GM12878 (cell line): ENCODE measurements at regions of chr20 and their contacts with region 1.

Region 1: GRCh38 chr20:38893565-38894090 is 32.6 kb upstream of the FAM83D start:
- DNase-seq: peak; percentile 38
- ATAC-seq: peak; percentile 81
- H3K4me3 ChIP-seq: no peak overlapping the region
- H3K27ac ChIP-seq: peak overlapping the region; percentile 91
- H3K4me1 ChIP-seq: peaks cover 50% of the 10 kb centered on the region
- H3K27me3 ChIP-seq: no peaks in the 10 kb centered on the region
- CTCF ChIP-seq: peak; percentile 90 to 98 (median 95)
- EP300 ChIP-seq: no peak
- POLR2A ChIP-seq: no peak; the same call in 1 of the 2 replicates
- RAD21 ChIP-seq: peak; percentile 95

Region 2: DNA sequence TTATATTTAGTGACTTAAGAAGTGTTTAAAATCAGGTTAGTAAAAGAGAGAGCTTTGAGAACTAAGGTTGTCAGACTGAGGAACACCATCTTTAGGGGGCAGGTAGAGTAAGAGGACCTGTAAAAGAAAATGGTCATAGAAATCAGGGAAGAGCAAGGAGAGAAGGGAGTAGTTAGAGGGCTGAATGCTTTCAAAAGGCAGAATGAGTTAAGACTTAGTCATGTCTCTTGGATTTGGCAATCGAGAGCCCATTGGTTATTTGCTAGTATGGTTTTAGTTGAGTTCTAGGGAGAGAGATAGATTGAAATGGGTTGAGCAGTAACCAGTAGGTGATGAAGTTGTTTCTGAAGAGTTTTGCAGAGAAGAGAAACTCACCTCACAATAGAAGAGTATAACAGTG is 369.9 kb before region 1 on chr20:
- CTCF ChIA-PET with region 1: no interaction called
- POLR2A ChIA-PET with region 1: no interaction called
- RAD21 ChIA-PET with region 1: no interaction called
- SMC1A ChIA-PET with region 1: no interaction called
- in situ Hi-C with region 1: no loop called
- intact Hi-C with region 1: no loop called
- DNase-seq: no peak
- ATAC-seq: no peak
- H3K4me3 ChIP-seq: no peak overlapping the region
- H3K27ac ChIP-seq: no peak overlapping the region
- H3K4me1 ChIP-seq: no peaks in the 10 kb centered on the region
- H3K27me3 ChIP-seq: no peaks in the 10 kb centered on the region
- CTCF ChIP-seq: no peak
- EP300 ChIP-seq: no peak
- POLR2A ChIP-seq: no peak
- RAD21 ChIP-seq: no peak

Region 3: DNA sequence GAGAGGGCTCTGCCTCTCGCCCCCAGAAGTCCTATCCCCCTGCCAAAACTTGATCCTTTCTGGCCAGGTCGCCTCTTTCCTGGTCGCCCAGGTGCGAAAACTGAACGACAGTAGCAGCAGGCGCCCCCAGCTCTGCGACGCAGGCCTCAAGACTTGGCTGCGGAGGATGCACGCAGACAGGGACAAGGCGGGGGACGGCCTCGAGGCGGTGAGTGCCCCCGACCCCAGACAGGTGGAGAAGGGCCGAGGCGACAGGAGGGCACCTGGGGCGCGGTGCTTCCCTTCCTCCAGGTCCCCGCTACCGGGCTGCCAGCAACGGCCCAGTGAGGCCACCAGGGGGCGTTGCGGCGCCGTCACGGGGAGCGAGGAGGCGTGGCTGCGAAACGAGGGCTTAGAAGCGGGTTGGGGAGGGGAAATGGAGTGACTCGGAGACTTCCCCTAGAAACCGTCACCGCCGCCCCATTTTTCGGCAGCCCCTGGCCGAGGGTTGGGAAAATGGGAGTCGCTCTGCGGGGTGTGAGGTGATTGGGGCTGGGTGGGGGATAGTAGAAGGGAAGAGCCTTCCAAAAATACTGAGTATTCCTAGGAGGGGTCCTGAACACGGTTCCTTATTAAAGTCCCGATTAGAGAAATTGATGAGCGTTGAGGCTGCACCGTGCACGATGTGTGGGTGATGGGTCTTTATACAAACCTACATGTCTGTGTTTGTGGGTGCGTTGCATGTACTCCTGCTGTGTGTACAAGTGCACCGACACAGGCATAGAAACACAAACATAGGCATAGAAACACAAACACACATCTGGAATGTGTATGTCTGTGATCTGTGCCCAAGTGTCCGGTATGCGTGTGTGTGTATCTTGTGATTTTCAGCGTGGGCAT is 247.4 kb before region 1 on chr20:
- CTCF ChIA-PET with region 1: interaction called, 41 read pairs
- POLR2A ChIA-PET with region 1: interaction called, 3 read pairs
- RAD21 ChIA-PET with region 1: interaction called, 9 read pairs
- SMC1A ChIA-PET with region 1: interaction called, 19 read pairs
- in situ Hi-C with region 1: loop called (anchors 5 kb)
- intact Hi-C with region 1: loop called (anchors 1 kb)
- DNase-seq: peak; percentile 25
- ATAC-seq: peak; percentile 97
- H3K4me3 ChIP-seq: no peak overlapping the region; the same call in 1 of the 2 replicates
- H3K27ac ChIP-seq: no peak overlapping the region
- H3K4me1 ChIP-seq: no peaks in the 10 kb centered on the region; the same call in none of the 2 replicates
- H3K27me3 ChIP-seq: peaks cover 0 to 3% of the 10 kb centered on the region in 2 experiments; a peak in 2 of 4 replicates
- CTCF ChIP-seq: peak; percentile 89 to 97 (median 96)
- EP300 ChIP-seq: no peak
- POLR2A ChIP-seq: no peak
- RAD21 ChIP-seq: peak; percentile 94

Region 4: DNA sequence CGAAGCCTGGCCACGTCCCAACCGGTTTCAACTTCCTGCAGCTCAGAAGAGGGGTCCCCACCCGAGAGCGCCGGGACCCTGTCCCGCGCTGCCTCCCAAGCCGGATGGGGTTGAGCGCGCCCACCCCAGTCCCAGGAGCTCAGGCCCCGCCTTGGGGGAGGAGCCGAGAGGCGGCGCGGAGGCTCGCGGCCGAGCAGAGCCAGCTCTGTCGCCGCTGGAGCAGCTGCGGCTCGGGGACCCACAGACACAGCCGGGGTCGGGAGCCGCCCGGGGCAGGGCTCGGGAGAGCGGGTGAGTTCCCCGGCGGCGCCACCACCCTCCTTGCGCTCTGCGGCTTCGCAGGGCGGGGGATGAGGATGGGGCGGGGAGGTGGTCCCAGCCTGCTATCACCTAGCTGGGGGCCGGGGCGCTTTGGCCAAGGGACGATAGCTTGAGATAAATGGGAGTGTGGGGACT is 88.1 kb before region 1 on chr20 and contains the start of gene PPP1R16B:
- CTCF ChIA-PET with region 1: interaction called, 91 read pairs
- POLR2A ChIA-PET with region 1: interaction called, 43 read pairs
- RAD21 ChIA-PET with region 1: interaction called, 167 read pairs
- SMC1A ChIA-PET with region 1: interaction called, 103 read pairs
- in situ Hi-C with region 1: no loop called
- intact Hi-C with region 1: loop called (anchors 1 kb)
- DNase-seq: no peak
- ATAC-seq: peak; percentile 78
- H3K4me3 ChIP-seq: peak within 1 kb of the TSS; percentile 87
- H3K27ac ChIP-seq: peak within 1 kb of the TSS; percentile 84
- H3K4me1 ChIP-seq: peaks cover 31% of the 10 kb centered on the region
- H3K27me3 ChIP-seq: no peaks in the 10 kb centered on the region
- CTCF ChIP-seq: no peak
- EP300 ChIP-seq: no peak
- POLR2A ChIP-seq: peak; percentile 96
- RAD21 ChIP-seq: no peak
- polyA plus RNA-seq, gene PPP1R16B: 13.4 to 14.2 TPM

Region 5: GRCh38 chr20:38833857-38834164 is 59.8 kb before region 1 on chr20:
- CTCF ChIA-PET with region 1: interaction called, 54 read pairs
- POLR2A ChIA-PET with region 1: interaction called, 5 read pairs
- RAD21 ChIA-PET with region 1: interaction called, 22 read pairs
- SMC1A ChIA-PET with region 1: interaction called, 23 read pairs
- in situ Hi-C with region 1: no loop called
- intact Hi-C with region 1: no loop called
- DNase-seq: no peak
- ATAC-seq: peak; percentile 51
- H3K4me3 ChIP-seq: no peak overlapping the region
- H3K27ac ChIP-seq: peak overlapping the region; percentile 77
- H3K4me1 ChIP-seq: peaks cover 54% of the 10 kb centered on the region
- H3K27me3 ChIP-seq: no peaks in the 10 kb centered on the region
- CTCF ChIP-seq: no peak
- EP300 ChIP-seq: no peak
- POLR2A ChIP-seq: no peak
- RAD21 ChIP-seq: no peak

Region 6: GRCh38 chr20:38863024-38863851 is 30.4 kb before region 1 on chr20:
- CTCF ChIA-PET with region 1: interaction called, 106 read pairs
- POLR2A ChIA-PET with region 1: interaction called, 27 read pairs
- RAD21 ChIA-PET with region 1: interaction called, 116 read pairs
- SMC1A ChIA-PET with region 1: interaction called, 111 read pairs
- in situ Hi-C with region 1: no loop called
- intact Hi-C with region 1: loop called (anchors 1 kb)
- DNase-seq: peak; percentile 75
- ATAC-seq: peak; percentile 82
- H3K4me3 ChIP-seq: peak overlapping the region; percentile 38; the same call in 1 of the 2 replicates
- H3K27ac ChIP-seq: peak overlapping the region; percentile 97
- H3K4me1 ChIP-seq: peaks cover 78% of the 10 kb centered on the region
- H3K27me3 ChIP-seq: no peaks in the 10 kb centered on the region
- CTCF ChIP-seq: no peak
- EP300 ChIP-seq: peak; percentile 43 to 68; a peak in 1 of 4 replicates
- POLR2A ChIP-seq: peak; percentile 44; the same call in 1 of the 2 replicates
- RAD21 ChIP-seq: no peak

Region 7: GRCh38 chr20:38915355-38915754 is 21.7 kb after region 1 on chr20:
- CTCF ChIA-PET with region 1: no interaction called
- POLR2A ChIA-PET with region 1: no interaction called
- RAD21 ChIA-PET with region 1: no interaction called
- SMC1A ChIA-PET with region 1: no interaction called
- in situ Hi-C with region 1: no loop called
- intact Hi-C with region 1: no loop called
- DNase-seq: no peak
- ATAC-seq: no peak
- H3K4me3 ChIP-seq: no peak overlapping the region
- H3K27ac ChIP-seq: no peak overlapping the region
- H3K4me1 ChIP-seq: no peaks in the 10 kb centered on the region
- H3K27me3 ChIP-seq: no peaks in the 10 kb centered on the region
- CTCF ChIP-seq: no peak
- EP300 ChIP-seq: no peak
- POLR2A ChIP-seq: no peak
- RAD21 ChIP-seq: no peak

Region 8: GRCh38 chr20:38962044-38962927 is 68.7 kb after region 1 on chr20 and contains the start of gene DHX35:
- CTCF ChIA-PET with region 1: interaction called, 14 read pairs
- POLR2A ChIA-PET with region 1: no interaction called
- RAD21 ChIA-PET with region 1: interaction called, 4 read pairs
- SMC1A ChIA-PET with region 1: interaction called, 3 read pairs
- in situ Hi-C with region 1: no loop called
- intact Hi-C with region 1: no loop called
- DNase-seq: peak; percentile 91
- ATAC-seq: peak; percentile 98
- H3K4me3 ChIP-seq: peak within 1 kb of the TSS; percentile 88
- H3K27ac ChIP-seq: peak within 1 kb of the TSS; percentile 91
- H3K4me1 ChIP-seq: no peaks in the 10 kb centered on the region
- H3K27me3 ChIP-seq: no peaks in the 10 kb centered on the region
- CTCF ChIP-seq: peak; percentile 19 to 50 (median 38); a peak in 4 of 6 replicates
- EP300 ChIP-seq: peak in 1 of 2 experiments; percentile 34; a peak in 1 of 4 replicates
- POLR2A ChIP-seq: peak; percentile 90
- RAD21 ChIP-seq: peak; percentile 45; the same call in 1 of the 2 replicates
- polyA plus RNA-seq, gene DHX35: 4.3 to 4.4 TPM